Activated naive CD8-positive, alpha-beta T cell treated with anti-CD3 and anti-CD28 coated beads, Interleukin-2, amount 10 ng/mL, durations not matched to agents 7 days and 5 days (primary cell): ENCODE measurements at regions of chr12 and their contacts with region 1.

Region 1: DNA sequence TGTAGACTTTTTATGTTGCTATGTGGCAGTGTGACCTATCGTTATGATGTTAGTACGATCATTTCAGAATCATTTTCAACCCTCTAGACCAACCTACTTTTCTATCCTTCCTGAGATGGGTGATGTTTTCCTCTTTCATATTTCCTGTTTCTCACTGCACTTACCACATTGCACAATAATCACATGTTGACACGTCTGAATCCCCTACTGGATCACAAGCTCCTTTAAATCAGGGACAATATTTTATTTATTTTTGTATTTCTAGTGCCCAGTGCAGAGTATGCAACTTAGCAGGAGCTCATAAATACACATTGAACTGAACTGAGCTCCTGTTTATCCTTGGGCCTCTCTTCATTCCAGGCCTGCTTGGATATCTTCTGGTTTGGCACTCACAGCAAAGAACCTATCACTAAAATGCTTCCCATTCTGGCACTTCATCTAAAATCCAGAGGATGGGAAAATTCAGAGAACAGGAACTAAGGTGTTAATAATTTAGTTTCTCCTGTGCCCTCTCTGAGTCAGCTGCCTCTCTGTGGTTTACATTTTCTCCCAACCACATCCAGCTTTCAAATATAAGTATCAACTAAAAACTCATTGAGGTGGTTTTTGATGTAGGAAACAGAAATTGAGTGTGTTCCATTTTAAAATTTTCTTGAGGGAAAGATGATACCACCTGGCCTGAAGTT is 69.4 kb upstream of the DYRK2 start:
- DNase-seq: no peak
- ATAC-seq: peak; percentile 77
- H3K4me3 Mint-ChIP-seq: peak overlapping the region; percentile 71
- H3K27ac Mint-ChIP-seq: peak overlapping the region; percentile 98
- H3K4me1 Mint-ChIP-seq: peaks cover 25% of the 10 kb centered on the region
- H3K27me3 Mint-ChIP-seq: no peaks in the 10 kb centered on the region

Region 2: GRCh38 chr12:67410667-67411067 is 168.5 kb before region 1 on chr12:
- POLR2A ChIA-PET with region 1: no interaction called
- DNase-seq: no peak
- ATAC-seq: no peak
- H3K4me3 Mint-ChIP-seq: no peak overlapping the region
- H3K27ac Mint-ChIP-seq: no peak overlapping the region
- H3K4me1 Mint-ChIP-seq: no peaks in the 10 kb centered on the region
- H3K27me3 Mint-ChIP-seq: peaks cover 4% of the 10 kb centered on the region

Region 3: DNA sequence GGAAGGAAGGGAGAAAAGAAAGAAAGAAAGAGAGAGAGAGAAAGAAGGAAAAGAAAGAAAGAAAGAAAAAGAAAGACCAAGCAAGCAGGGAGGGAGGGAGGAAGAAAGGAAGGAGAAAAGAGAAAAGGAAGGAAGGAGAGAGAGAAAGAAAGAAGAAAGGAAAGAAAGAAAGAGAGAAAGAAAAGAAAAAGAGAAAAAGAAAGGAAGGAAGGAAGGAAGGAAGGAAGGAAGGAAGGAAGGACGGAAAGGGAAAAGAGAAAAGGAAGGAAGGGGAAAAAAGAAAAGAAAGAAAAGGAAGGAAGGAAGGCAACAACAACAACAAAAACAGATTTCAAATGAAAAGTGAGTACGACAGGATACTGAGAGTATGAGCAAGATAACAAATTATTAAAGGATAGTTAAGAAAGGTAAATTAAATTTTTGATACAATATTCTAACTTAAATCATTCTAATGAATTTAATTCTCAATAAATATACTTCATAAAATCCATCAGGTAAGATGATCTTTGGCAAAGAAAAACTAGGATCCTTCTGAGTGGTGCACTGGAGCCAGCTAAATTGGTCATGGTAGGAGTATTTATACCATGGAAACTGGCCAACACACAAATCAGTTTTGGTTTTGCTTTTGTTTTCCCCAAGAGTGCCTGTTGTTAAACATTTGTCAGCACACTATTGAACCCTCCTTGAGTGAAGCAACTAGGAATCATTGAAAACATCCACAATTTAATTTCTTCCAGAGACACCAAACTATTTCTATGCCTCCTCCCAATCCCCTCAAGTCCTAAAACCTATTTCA is 13.3 kb after region 1 on chr12:
- POLR2A ChIA-PET with region 1: interaction called, 21 read pairs
- DNase-seq: no peak
- ATAC-seq: peak; percentile 83
- H3K4me3 Mint-ChIP-seq: peak overlapping the region; percentile 81
- H3K27ac Mint-ChIP-seq: peak overlapping the region; percentile 89
- H3K4me1 Mint-ChIP-seq: peaks cover 36% of the 10 kb centered on the region
- H3K27me3 Mint-ChIP-seq: no peaks in the 10 kb centered on the region

Region 4: DNA sequence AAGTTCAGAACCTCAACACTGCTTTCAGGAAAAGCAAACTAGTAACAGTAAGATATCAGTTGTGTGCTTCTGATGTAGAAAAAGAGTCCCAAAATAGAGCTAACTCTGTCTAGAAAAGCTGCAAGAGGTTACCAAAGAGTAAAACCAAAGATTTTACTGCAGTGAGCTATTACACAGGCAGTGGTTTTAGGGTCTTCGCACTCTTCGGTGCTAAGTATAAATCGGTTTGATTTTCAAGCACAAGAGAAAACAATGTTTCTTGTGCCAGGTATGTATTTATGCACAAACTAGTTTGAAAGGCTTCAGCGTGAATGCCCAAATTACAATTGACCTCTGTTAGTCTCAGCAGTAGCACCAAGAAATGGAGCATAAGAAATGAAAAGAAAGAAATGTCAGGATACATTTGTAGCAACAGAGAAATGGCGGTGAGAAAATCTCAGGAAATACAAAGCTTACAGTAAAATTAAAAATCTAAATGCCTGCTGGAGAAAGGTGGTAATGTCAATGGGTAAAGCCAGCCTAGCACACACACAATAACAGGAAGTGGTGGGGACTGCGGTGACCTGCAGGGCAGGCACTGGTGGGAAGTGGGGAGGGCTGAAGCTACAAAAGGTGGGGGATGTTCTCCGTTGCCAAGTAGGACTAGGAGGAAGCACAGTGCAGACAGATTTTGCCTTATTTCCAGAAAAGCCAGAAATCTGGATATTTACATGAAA is 51.4 kb after region 1 on chr12:
- POLR2A ChIA-PET with region 1: interaction called, 19 read pairs
- DNase-seq: peak; percentile 88
- ATAC-seq: peak; percentile 99
- H3K4me3 Mint-ChIP-seq: peak overlapping the region; percentile 72
- H3K27ac Mint-ChIP-seq: peak overlapping the region; percentile 94
- H3K4me1 Mint-ChIP-seq: peaks cover 50% of the 10 kb centered on the region
- H3K27me3 Mint-ChIP-seq: peaks cover 3% of the 10 kb centered on the region